Calu3 (cell line): ENCODE measurements at regions of chr15 and their contacts with region 1.

Region 1: GRCh38 chr15:45429974-45430792 is 51.8 kb upstream of the GATM start:
- DNase-seq: peak; percentile 88
- H3K4me3 Mint-ChIP-seq: peak overlapping the region; percentile 64
- H3K27ac Mint-ChIP-seq: peak overlapping the region; percentile 50
- H3K4me1 Mint-ChIP-seq: peaks cover 13% of the 10 kb centered on the region
- H3K27me3 Mint-ChIP-seq: no peaks in the 10 kb centered on the region
- CTCF ChIP-seq: peak; percentile 99

Region 2: DNA sequence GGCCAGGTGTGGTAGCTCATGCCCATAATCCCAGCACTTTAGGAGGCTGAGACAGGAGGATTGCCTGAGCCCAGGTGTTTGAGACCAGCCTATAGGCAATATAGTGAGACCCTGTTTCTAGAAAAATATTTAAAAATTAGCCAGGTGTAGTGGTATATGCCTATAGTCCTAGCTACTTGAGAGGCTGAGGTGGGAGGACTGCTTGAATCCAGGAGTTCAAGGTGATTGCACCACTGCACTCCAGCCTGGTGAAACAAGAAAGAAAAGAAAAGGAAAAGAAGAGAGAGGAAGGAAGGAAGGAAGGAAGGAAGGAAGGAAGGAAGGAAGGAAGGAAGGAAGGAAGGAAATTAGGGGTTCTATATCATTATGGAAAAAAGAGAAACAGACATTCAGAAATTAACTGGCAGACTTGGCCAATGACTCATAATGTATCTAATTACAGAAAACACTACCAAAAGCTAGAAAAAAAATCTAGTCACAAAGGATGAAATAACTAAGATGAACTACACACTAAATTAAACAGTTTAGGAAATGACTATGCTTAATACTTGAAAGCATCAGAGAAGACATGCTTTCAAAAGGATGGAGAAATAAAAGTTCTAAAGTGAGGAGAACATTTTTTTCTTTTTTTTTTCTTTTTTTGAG is 519.1 kb before region 1 on chr15:
- CTCF ChIA-PET with region 1: no interaction called
- intact Hi-C with region 1: no loop called
- DNase-seq: no peak
- H3K4me3 Mint-ChIP-seq: no peak overlapping the region
- H3K27ac Mint-ChIP-seq: no peak overlapping the region
- H3K4me1 Mint-ChIP-seq: no peaks in the 10 kb centered on the region
- H3K27me3 Mint-ChIP-seq: no peaks in the 10 kb centered on the region
- CTCF ChIP-seq: no peak

Region 3: GRCh38 chr15:45442500-45443135 is 12.4 kb after region 1 on chr15:
- CTCF ChIA-PET with region 1: interaction called, 6 read pairs
- intact Hi-C with region 1: loop called (anchors 1 kb)
- DNase-seq: no peak
- H3K4me3 Mint-ChIP-seq: no peak overlapping the region
- H3K27ac Mint-ChIP-seq: peak overlapping the region; percentile 60
- H3K4me1 Mint-ChIP-seq: peaks cover 56% of the 10 kb centered on the region
- H3K27me3 Mint-ChIP-seq: no peaks in the 10 kb centered on the region
- CTCF ChIP-seq: no peak